Ascending aorta (tissue), 2 donors: ENCODE measurements at regions of chr20 and their contacts with region 1.

Region 1: DNA sequence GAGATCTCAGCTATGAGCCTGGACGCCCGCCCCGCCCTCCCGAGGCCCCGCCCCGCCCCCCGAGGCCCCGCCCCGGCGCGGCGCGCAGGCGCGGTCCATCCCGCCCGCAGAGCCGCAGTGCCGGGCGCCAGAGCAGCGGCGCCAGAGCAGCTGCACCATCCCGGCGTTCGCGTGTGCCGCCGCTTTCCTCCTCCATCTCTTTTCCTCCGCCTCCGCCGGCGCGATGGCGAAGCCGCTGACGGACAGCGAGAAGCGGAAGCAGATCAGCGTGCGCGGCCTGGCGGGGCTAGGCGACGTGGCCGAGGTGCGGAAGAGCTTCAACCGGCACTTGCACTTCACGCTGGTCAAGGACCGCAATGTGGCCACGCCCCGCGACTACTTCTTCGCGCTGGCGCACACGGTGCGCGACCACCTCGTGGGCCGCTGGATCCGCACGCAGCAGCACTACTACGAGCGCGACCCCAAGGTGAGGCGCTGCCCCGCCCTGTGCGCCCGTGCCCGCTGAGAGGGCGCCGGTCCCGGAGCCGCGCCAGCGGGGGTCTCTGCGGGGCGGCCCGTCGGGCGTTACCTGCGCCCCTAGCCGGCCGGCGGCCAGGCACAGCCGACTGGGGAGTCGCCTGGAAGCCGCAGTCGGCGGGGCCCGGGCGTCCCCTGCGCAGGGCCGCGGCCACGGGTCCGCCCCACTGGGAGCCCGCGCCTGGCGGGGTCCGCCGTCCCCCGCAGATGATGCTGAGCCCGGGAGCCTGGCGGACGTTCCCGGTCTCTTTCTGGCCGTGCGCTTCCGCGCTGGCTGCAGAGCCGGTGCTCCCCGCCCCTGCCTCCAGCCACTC is at the start of gene PYGB:
- DNase-seq: peak in 1 of 2 donors; percentile 85
- H3K4me3 ChIP-seq: peak within 1 kb of the TSS; percentile 77 to 98
- H3K27ac ChIP-seq: peak within 1 kb of the TSS; percentile 94 to 98
- H3K4me1 ChIP-seq: peaks cover 12 to 38% of the 10 kb centered on the region in 2 donors
- H3K27me3 ChIP-seq: no peaks in the 10 kb centered on the region
- CTCF ChIP-seq: no peak
- total RNA-seq, gene PYGB: 125 TPM

Region 2: GRCh38 chr20:25195014-25195961 is 52.9 kb before region 1 on chr20 and contains the start of gene ENTPD6:
- intact Hi-C with region 1: loop called (anchors 1 kb)
- DNase-seq: peak; percentile 63 to 93
- H3K4me3 ChIP-seq: peak within 1 kb of the TSS; percentile 78 to 87
- H3K27ac ChIP-seq: peak within 1 kb of the TSS; percentile 75
- H3K4me1 ChIP-seq: peaks cover 0 to 19% of the 10 kb centered on the region in 2 donors
- H3K27me3 ChIP-seq: no peaks in the 10 kb centered on the region
- CTCF ChIP-seq: peak in 2 of 3 experiments; percentile 8 to 38
- total RNA-seq, gene ENTPD6: 66.5 TPM

Region 3: DNA sequence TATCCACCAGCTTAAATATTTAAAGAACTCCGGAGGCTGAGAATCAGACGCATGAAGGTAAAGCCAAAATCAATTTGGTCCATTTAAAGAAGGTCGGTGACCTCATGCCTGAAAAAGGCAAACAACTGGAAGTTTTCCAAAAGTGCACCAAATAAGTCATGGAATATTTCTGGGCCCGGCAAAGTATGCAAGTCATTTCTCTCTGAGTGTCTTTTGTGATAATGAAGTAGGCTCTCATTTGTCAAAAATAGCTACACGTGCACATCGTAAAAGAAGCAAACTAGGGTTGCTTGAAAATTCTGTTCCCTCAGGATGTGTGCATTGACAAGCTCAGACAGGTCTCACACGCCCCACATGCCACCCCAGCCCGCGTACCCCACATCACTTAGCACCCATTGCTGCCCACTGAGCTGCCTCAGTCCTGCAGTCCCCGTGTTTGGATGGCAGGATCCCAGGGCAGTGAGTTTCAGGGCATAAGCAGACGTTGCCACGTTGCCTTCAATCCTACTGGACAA is 20.8 kb before region 1 on chr20:
- intact Hi-C with region 1: loop called (anchors 1 kb)
- DNase-seq: peak in 1 of 2 donors; percentile 80
- H3K4me3 ChIP-seq: no peak overlapping the region
- H3K27ac ChIP-seq: peak overlapping the region; percentile 93 to 97
- H3K4me1 ChIP-seq: peaks cover 16 to 39% of the 10 kb centered on the region in 2 donors
- H3K27me3 ChIP-seq: no peaks in the 10 kb centered on the region
- CTCF ChIP-seq: no peak

Region 4: GRCh38 chr20:25237610-25238318 is 10.4 kb before region 1 on chr20:
- intact Hi-C with region 1: loop called (anchors 1 kb)
- DNase-seq: peak; percentile 78 to 94
- H3K4me3 ChIP-seq: no peak overlapping the region
- H3K27ac ChIP-seq: peak overlapping the region; percentile 83 to 97
- H3K4me1 ChIP-seq: peaks cover 21 to 48% of the 10 kb centered on the region in 2 donors
- H3K27me3 ChIP-seq: no peaks in the 10 kb centered on the region
- CTCF ChIP-seq: no peak

Region 5: GRCh38 chr20:25294459-25295385 is 46.6 kb after region 1 on chr20:
- intact Hi-C with region 1: loop called (anchors 5 kb)
- DNase-seq: no peak
- H3K4me3 ChIP-seq: no peak overlapping the region
- H3K27ac ChIP-seq: peak overlapping the region; percentile 61 to 64
- H3K4me1 ChIP-seq: peaks cover 7 to 27% of the 10 kb centered on the region in 2 donors
- H3K27me3 ChIP-seq: no peaks in the 10 kb centered on the region
- CTCF ChIP-seq: peak; percentile 57 to 80 (median 66)

Region 6: GRCh38 chr20:25390538-25391528 is 142.7 kb after region 1 on chr20 and contains the start of gene ABHD12:
- intact Hi-C with region 1: loop called (anchors 1 kb)
- DNase-seq: peak; percentile 91 to 99
- H3K4me3 ChIP-seq: peak within 1 kb of the TSS; percentile 83 to 99
- H3K27ac ChIP-seq: peak within 1 kb of the TSS; percentile 70 to 91
- H3K4me1 ChIP-seq: peaks cover 0 to 3% of the 10 kb centered on the region in 2 donors
- H3K27me3 ChIP-seq: no peaks in the 10 kb centered on the region
- CTCF ChIP-seq: no peak
- total RNA-seq, gene ABHD12: 24.3 TPM

Region 7: GRCh38 chr20:25539742-25540672 is 291.8 kb after region 1 on chr20:
- intact Hi-C with region 1: loop called (anchors 10 kb)
- DNase-seq: no peak
- H3K4me3 ChIP-seq: peak overlapping the region; percentile 36 to 63
- H3K27ac ChIP-seq: peak overlapping the region; percentile 45 to 65
- H3K4me1 ChIP-seq: peaks cover 8 to 34% of the 10 kb centered on the region in 2 donors
- H3K27me3 ChIP-seq: no peaks in the 10 kb centered on the region
- CTCF ChIP-seq: peak; percentile 31 to 61 (median 42)